Activated CD4-positive, alpha-beta T cell treated with anti-CD3 and anti-CD28 coated beads for 36 hours (primary cell): ENCODE measurements at regions of chr11 and their contacts with region 1.

Region 1: DNA sequence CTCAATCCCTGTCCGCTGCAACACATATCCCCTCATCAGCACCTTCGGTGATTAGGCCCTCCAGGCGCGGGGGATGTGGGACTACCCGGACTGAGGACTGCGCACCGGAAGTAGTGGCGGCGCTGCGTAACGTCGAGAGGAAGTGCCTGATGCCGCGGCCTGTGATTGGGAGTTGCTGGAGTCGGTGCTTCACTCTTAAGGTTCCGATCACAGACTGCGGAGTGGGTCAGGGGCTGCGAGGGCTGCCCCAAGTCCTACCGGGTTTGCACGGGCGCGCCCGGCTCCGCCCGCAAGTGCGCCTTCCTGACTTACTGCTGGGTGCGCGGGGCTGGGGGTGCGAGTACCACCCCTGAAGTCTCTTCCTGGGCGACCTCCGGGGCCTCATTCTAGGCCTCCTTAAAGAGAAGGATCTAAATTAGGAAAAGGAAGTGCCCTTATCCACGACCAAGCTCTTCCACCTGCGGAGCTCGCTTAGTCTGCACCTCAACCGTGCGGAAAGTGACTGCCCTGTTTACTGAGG is at the start of gene ALKBH3:
- DNase-seq: peak; percentile 96
- ATAC-seq: peak; percentile 99
- H3K4me3 Mint-ChIP-seq: peak within 1 kb of the TSS; percentile 90
- H3K27ac Mint-ChIP-seq: peak within 1 kb of the TSS; percentile 84
- H3K4me1 Mint-ChIP-seq: peaks cover 23% of the 10 kb centered on the region
- H3K27me3 Mint-ChIP-seq: peaks cover 8% of the 10 kb centered on the region
- total RNA-seq, gene ALKBH3: 41.9 to 42.3 TPM

Region 2: DNA sequence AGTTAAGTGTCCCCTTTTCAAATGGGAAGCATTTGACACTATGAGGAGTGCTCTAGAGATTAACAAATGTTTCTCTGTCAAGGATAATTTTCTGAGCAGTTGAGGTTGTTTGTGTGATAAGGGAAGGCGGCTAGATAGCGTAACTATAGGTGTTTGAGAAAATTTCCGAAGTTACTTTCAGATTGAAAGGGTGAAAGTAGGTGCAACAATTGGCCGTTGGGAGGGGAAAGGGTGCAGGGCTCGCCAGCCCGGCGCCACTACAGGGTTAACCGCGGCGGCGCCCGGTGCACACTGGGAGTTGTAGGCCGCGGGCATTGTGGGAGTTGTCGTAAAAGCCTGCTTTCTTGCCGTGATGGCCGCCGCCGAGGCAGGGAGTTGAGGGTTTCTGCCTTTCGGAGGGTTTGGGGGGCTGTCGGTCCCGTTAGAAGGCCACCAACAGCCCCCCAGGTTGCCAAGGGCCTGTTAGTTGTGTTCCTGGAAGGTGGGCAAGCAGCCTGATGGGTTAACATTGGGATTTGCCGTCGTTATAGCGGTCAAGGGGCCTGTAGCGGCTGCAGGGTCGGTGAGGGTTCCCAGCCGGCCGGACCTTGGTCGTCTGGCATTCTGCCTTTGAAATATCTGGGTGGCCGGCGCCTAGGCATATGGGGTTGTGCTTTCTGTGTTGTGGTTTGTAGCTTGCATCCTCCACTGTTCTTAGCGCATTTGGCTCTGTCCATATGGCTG is 236.6 kb before region 1 on chr11:
- CTCF ChIA-PET with region 1: no interaction called
- POLR2A ChIA-PET with region 1: no interaction called
- intact Hi-C with region 1: loop called (anchors 1 to 5 kb)
- DNase-seq: peak; percentile 94
- ATAC-seq: peak; percentile 99
- H3K4me3 Mint-ChIP-seq: peak overlapping the region; percentile 78
- H3K27ac Mint-ChIP-seq: peak overlapping the region; percentile 89
- H3K4me1 Mint-ChIP-seq: peaks cover 19% of the 10 kb centered on the region
- H3K27me3 Mint-ChIP-seq: peaks cover 15% of the 10 kb centered on the region

Region 3: GRCh38 chr11:43830928-43831440 is 49.7 kb before region 1 on chr11:
- CTCF ChIA-PET with region 1: interaction called, 5 read pairs
- POLR2A ChIA-PET with region 1: no interaction called
- intact Hi-C with region 1: loop called in 1 of 2 experiments (anchors 1 kb)
- DNase-seq: peak; percentile 81
- ATAC-seq: peak; percentile 99
- H3K4me3 Mint-ChIP-seq: no peak overlapping the region
- H3K27ac Mint-ChIP-seq: peak overlapping the region; percentile 73
- H3K4me1 Mint-ChIP-seq: peaks cover 24% of the 10 kb centered on the region
- H3K27me3 Mint-ChIP-seq: no peaks in the 10 kb centered on the region

Region 4: DNA sequence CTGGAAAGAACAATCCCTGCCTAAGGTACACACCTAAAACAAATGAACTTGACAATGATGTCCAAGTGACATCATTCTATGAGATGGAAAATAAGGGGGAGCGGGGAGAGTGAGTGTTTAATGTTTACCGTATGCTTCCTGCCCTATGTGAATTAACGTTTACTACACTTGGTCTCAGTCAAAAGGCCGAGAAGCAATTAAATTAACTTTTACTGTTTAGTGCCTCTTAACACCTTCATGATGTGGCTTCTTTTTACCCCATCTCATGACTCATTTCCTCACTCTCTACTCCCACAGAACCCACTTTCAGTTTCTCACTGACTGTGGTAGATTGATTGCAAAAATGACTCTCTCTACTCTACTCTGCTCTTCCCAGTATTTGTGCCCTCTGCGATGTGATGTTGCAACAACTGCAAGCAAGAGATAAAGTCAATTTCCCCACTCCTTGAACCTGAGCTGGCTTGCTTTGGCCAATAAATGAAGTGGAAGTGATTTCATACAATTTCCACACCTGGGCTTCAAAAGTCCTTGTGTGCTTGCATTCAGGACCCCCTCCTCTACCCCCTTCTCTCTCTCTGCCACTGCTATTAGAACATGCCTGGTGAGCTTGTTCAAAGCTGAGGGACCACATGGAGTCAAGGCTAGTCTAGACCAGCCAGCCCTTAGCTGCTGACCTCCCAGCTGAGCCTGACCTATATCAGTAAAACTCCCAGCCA is 11.7 kb before region 1 on chr11:
- CTCF ChIA-PET with region 1: interaction called, 3 read pairs
- POLR2A ChIA-PET with region 1: no interaction called
- intact Hi-C with region 1: loop called (anchors 1 kb)
- DNase-seq: peak; percentile 58
- ATAC-seq: peak; percentile 97
- H3K4me3 Mint-ChIP-seq: peak overlapping the region; percentile 7
- H3K27ac Mint-ChIP-seq: peak overlapping the region; percentile 8
- H3K4me1 Mint-ChIP-seq: peaks cover 21% of the 10 kb centered on the region
- H3K27me3 Mint-ChIP-seq: peaks cover 45% of the 10 kb centered on the region

Region 5: DNA sequence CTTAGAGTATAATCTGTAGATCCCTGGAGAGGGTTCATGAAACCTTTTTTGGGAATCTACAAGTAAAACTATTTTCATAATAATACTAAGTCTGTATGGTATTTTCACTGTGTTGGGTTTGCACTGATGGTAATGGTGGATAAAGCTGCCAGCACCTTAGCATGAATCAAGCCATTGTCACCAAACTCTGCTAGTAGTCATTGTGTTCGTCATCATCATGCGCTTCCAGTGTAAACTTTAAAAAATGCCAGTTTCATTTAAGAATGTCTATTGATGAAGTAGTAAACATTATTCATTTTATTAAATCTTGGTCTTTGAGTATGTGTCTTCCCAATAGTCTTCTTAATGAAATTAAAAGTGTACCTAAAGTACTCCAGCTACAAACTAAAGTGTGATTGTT is 14.9 kb after region 1 on chr11:
- CTCF ChIA-PET with region 1: interaction called, 24 read pairs
- POLR2A ChIA-PET with region 1: no interaction called
- intact Hi-C with region 1: no loop called
- DNase-seq: no peak
- ATAC-seq: no peak
- H3K4me3 Mint-ChIP-seq: no peak overlapping the region
- H3K27ac Mint-ChIP-seq: no peak overlapping the region
- H3K4me1 Mint-ChIP-seq: no peaks in the 10 kb centered on the region
- H3K27me3 Mint-ChIP-seq: no peaks in the 10 kb centered on the region

Region 6: DNA sequence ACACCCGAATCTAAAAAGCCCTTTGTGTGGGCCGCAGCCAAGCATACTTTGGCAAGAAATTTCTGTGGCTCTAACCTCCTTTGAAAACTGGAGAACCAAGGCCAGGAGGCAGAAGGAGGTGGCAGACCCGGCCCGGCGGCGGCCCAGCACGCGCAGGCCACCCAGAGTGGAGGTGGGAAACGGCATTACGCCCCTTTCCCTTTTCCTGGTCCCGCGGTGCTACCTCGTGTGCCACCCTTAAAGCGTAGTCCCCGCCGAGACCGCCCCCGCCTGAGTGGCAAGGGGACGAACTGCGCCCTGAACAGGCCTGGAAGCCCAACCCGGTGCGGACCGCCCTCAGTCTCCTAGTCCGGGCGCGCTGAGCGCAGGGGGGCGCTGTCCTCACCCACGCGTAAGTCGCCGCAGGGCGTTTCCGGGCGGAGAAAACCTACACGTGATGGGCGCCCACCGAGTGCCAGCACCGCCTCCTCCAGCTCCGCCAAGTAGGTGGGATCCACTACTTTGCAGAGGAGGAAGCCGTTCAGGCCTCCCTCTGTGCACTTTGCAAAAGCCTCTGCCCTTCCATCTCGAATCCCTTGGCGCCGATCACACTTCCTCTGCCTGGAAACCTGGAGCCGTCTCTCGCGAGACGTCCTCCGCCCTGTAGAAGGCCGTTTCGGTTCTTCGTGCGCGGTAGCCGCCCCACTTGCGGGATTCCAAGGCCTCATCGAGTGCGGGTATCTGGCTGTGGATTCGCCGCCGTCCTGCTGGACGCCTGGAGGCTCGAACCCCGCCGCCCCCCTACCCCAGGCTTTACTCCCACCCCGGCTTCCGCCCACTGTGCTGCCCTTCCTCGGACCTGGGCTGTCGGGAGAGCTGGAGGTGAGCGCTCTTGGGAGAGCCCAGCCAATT is 185.4 kb after region 1 on chr11 and contains the start of gene ACCS:
- CTCF ChIA-PET with region 1: interaction called, 4 read pairs
- POLR2A ChIA-PET with region 1: no interaction called
- intact Hi-C with region 1: loop called (anchors 1 to 5 kb)
- DNase-seq: peak; percentile 91
- ATAC-seq: peak; percentile 95
- H3K4me3 Mint-ChIP-seq: peak within 1 kb of the TSS; percentile 79
- H3K27ac Mint-ChIP-seq: peak within 1 kb of the TSS; percentile 90
- H3K4me1 Mint-ChIP-seq: peaks cover 22% of the 10 kb centered on the region
- H3K27me3 Mint-ChIP-seq: no peaks in the 10 kb centered on the region
- total RNA-seq, gene ACCS: 6.6 to 7.2 TPM

Region 7: DNA sequence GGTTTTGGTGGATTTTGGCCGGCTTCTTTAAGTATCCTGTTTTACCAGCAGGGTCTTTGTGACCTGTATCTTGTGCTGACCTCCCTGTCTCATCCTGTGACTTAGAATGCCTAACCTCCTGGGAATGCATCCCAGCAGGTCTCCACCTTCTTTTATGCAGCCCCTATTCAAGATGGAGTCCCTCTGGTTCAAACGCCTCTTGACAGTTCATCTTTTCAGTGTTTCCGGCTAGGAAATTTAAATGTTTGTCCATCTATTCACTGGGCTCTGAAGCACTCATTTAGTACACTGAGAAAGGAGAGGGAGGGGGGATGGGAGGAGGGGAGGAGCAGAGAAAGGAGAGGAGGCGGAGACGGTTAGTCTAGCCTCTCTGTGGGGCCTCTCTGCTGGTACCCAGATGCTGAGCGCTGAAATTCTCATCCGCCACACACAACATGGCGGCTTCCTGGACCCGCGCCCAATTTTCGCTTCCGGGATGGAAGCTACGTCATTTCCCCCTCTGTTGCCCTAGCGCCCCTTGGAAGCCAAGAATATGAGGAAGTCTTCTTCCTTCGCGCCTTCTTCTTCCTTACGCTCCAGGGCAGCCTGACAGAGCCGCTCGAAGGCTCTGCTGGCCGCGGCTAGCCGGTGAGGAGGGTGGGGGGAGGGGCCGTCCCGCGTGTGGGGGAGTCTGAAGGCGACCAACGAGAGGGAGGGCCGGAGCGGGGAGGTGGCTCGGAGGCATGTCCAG is 1474.4 kb after region 1 on chr11:
- CTCF ChIA-PET with region 1: no interaction called
- POLR2A ChIA-PET with region 1: no interaction called
- intact Hi-C with region 1: loop called in 1 of 2 experiments (anchors 2 kb)
- DNase-seq: peak; percentile 93
- ATAC-seq: peak; percentile 97
- H3K4me3 Mint-ChIP-seq: peak overlapping the region; percentile 75
- H3K27ac Mint-ChIP-seq: peak overlapping the region; percentile 72
- H3K4me1 Mint-ChIP-seq: peaks cover 21% of the 10 kb centered on the region
- H3K27me3 Mint-ChIP-seq: peaks cover 2% of the 10 kb centered on the region